Activated CD4-positive, alpha-beta memory T cell treated with anti-CD3 and anti-CD28 coated beads for 36 hours (primary cell): ENCODE measurements at regions of chr1 and their contacts with region 1.

Region 1: GRCh38 chr1:15994590-15995351 is 9.3 kb upstream of the SRARP start:
- DNase-seq: peak; percentile 72
- H3K4me3 Mint-ChIP-seq: no peak overlapping the region
- H3K27ac Mint-ChIP-seq: no peak overlapping the region
- H3K4me1 Mint-ChIP-seq: no peaks in the 10 kb centered on the region
- H3K27me3 Mint-ChIP-seq: no peaks in the 10 kb centered on the region

Region 2: GRCh38 chr1:15803354-15803753 is 191.4 kb before region 1 on chr1:
- CTCF ChIA-PET with region 1: interaction called, 12 read pairs
- POLR2A ChIA-PET with region 1: no interaction called
- intact Hi-C with region 1: loop called (anchors 1 kb)
- DNase-seq: peak; percentile 32
- H3K4me3 Mint-ChIP-seq: no peak overlapping the region
- H3K27ac Mint-ChIP-seq: no peak overlapping the region
- H3K4me1 Mint-ChIP-seq: no peaks in the 10 kb centered on the region
- H3K27me3 Mint-ChIP-seq: no peaks in the 10 kb centered on the region